Posterior vena cava (tissue), 2 donors: ENCODE measurements at regions of chr19 and their contacts with region 1.

Region 1: GRCh38 chr19:46529622-46530462 is 34.2 kb upstream of the PNMA8B start:
- DNase-seq: peak; percentile 93

Region 2: DNA sequence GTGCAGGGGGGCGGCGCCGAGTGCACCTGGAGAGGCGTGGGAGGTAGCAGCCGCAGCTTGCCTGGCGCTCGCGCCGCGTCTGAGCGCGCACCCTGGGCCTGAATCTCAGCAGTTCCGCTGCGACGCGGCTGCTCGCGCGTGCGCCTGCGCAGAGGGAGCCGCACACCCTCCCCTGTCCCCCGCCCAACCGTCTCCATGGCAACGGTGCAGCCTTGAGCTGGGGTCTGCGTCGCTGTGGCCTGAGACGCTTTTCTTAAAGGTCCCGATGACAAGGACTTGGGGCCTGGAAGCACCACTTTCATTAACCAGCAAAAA is 34.1 kb before region 1 on chr19 and contains the start of gene PNMA8B:
- intact Hi-C with region 1: no loop called
- DNase-seq: peak; percentile 88
- total RNA-seq, gene PNMA8B: 1.8 to 3.8 TPM

Region 3: DNA sequence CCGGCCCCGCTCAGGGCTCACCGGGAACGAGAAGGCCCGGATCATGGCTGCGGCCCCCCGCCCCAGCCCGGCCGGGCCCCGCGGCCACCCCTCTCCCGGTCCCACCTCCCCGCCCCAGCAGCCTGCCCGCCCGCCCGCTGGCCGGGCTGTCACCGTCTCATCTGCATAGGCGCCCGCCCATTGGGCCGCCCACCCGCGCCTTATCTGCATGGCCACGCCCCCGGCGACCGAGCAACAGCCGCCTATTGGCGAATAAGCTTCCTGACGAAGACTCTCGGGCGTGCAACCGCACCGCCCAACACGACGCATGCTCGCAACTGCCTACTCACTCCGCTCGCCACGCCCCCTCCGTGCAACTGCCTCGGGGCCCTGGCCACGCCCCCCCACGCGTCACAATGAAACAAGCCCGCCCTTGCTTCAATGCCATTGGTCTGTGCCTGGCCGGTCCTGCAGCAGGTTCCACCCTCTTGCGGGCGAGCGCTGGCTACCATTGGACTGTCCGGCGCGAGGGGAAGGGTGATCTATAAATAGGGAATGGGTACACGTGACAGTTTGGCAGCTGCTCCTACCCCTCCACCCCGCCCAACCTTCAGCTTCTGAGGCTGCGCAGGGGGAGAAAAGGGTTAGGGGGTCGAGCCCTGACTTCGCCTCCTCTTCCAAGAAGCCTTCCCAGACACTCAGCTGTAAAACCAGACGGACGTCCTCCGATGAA is 131.3 kb after region 1 on chr19 and contains the start of gene DACT3:
- intact Hi-C with region 1: loop called in 1 of 2 experiments (anchors 10 kb)
- DNase-seq: peak; percentile 100
- total RNA-seq, gene DACT3: 72.0 to 122 TPM

Region 4: DNA sequence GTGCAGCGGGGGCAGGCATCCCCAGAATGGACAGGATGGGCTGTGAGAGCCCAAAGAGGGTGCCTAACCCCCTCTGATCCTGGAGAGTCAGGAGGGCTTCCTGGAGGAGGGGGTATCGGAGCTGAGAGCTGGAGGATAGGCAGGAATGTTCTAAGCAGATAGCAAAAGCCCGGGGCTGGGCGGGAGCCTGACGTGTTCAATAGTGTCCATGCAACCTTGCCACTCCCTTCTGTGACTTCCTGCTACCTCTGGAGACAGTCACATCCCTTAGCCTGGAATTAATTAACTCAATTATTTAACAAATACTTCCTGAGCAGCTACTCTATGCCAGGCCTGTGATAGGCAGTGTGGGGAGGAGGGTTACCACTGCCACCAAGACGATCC is 309.9 kb after region 1 on chr19:
- intact Hi-C with region 1: no loop called
- DNase-seq: no peak